ENCODE measurements at regions of chr6 and their contacts with region 1.

Region 1: DNA sequence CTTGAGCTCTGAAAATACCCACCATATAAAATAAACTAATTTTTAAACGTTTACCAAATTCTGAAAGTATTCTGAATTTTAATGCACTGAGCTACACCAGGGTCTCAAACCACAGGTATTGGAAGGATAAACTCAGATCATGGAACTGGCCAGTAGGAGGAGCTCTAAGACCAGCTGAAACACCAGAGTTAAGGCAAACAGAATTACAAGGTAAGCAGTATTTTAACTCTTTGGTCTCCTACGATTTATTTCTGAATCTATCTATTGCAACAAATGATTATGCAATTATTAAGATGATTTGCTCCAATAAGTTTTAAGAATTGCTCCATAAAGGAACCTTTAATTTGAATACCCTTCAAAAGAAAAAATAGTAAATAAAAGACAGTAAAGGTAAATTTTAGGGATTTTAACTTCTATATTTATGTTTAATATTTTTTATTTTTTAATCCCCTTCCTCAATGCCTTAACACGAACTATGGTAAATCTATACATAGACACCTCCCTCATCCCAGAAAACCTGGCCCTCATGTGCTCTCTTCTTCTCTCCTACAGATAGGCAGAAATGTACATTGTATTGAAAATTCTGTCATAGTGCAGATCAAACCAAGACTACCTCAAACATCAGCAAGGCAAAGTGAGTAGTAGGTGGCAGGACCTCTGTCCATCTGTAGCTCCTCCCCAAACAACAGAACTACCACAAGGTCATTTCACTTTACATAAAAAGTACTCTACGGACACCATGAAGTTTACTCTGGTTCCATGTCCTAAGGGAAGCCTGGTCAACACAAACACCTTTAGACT is 58.4 kb downstream of the SMLR1 start:
- DNase-seq: peak; percentile 27 to 82 (median 73)
- ATAC-seq: peak; percentile 97
- H3K4me3 ChIP-seq: no peak overlapping the region
- H3K4me3 Mint-ChIP-seq: no peak overlapping the region
- H3K27ac ChIP-seq: no peak overlapping the region
- H3K27ac Mint-ChIP-seq: peak overlapping the region in 1 of 9 donors; percentile 3
- H3K4me1 ChIP-seq: no peaks in the 10 kb centered on the region
- H3K4me1 Mint-ChIP-seq: no peaks in the 10 kb centered on the region
- H3K27me3 ChIP-seq: no peaks in the 10 kb centered on the region
- H3K27me3 Mint-ChIP-seq: no peaks in the 10 kb centered on the region

Region 2: DNA sequence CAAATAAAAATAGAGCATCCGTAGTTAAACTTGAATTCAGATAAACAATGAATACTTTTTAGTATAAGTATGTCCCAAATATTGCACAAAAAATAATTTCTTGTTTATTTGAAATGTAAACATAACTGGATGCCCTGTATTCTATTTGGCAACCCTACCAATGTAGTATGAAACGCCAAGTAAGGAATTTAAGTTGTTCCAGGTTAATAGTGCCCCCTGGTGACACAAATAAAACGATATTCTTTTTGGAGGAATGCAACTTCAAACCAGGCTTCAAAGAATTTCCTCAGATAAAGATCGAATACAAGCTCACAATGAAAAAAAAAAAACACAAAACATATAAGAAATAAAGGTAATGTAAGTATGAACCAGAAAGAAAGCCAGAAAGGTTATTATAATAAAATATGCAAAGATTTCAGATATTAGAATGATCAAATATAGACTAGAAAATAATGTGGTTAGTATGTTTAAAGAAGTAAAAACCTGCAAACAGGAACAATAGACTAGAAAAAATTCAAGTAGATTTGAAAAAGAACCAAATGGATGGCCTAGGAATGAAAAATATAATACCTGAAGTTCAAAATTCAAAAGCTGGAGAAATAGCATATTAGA is 231.3 kb after region 1 on chr6:
- CTCF ChIA-PET with region 1: interaction called, 76 read pairs
- POLR2A ChIA-PET with region 1: interaction called, 3 read pairs
- intact Hi-C with region 1: loop called (anchors 1 kb)
- DNase-seq: peak in 6 of 9 donors; percentile 26 to 54 (median 42)
- ATAC-seq: peak; percentile 49
- H3K4me3 ChIP-seq: no peak overlapping the region
- H3K4me3 Mint-ChIP-seq: no peak overlapping the region
- H3K27ac ChIP-seq: no peak overlapping the region
- H3K27ac Mint-ChIP-seq: no peak overlapping the region
- H3K4me1 ChIP-seq: no peaks in the 10 kb centered on the region
- H3K4me1 Mint-ChIP-seq: peaks cover 0 to 2% (median 0%) of the 10 kb centered on the region in 7 donors
- H3K27me3 ChIP-seq: no peaks in the 10 kb centered on the region
- H3K27me3 Mint-ChIP-seq: peaks cover 0 to 8% (median 0%) of the 10 kb centered on the region in 5 donors

Region 3: GRCh38 chr6:131182991-131183425 is 297.4 kb after region 1 on chr6:
- CTCF ChIA-PET with region 1: no interaction called
- POLR2A ChIA-PET with region 1: no interaction called
- intact Hi-C with region 1: loop called in 1 of 2 experiments (anchors 5 kb)
- DNase-seq: peak in 8 of 9 donors; percentile 6 to 57 (median 47)
- ATAC-seq: peak; percentile 83
- H3K4me3 ChIP-seq: no peak overlapping the region
- H3K4me3 Mint-ChIP-seq: peak overlapping the region; percentile 10 to 85 (median 72)
- H3K27ac ChIP-seq: no peak overlapping the region
- H3K27ac Mint-ChIP-seq: peak overlapping the region; percentile 86 to 98 (median 94)
- H3K4me1 ChIP-seq: peaks cover 0 to 8% of the 10 kb centered on the region in 2 donors
- H3K4me1 Mint-ChIP-seq: peaks cover 5 to 22% (median 17%) of the 10 kb centered on the region in 7 donors
- H3K27me3 ChIP-seq: no peaks in the 10 kb centered on the region
- H3K27me3 Mint-ChIP-seq: no peaks in the 10 kb centered on the region

Region 4: GRCh38 chr6:131519670-131520436 is 634.3 kb after region 1 on chr6:
- CTCF ChIA-PET with region 1: no interaction called
- POLR2A ChIA-PET with region 1: no interaction called
- intact Hi-C with region 1: loop called in 1 of 2 experiments (anchors 5 kb)
- DNase-seq: peak in 7 of 9 donors; percentile 38 to 64 (median 55)
- ATAC-seq: peak; percentile 92
- H3K4me3 ChIP-seq: no peak overlapping the region
- H3K4me3 Mint-ChIP-seq: no peak overlapping the region
- H3K27ac ChIP-seq: no peak overlapping the region
- H3K27ac Mint-ChIP-seq: peak overlapping the region in 6 of 9 donors; percentile 29 to 69 (median 40)
- H3K4me1 ChIP-seq: peaks cover 0 to 9% of the 10 kb centered on the region in 2 donors
- H3K4me1 Mint-ChIP-seq: peaks cover 8 to 25% (median 20%) of the 10 kb centered on the region in 7 donors
- H3K27me3 ChIP-seq: no peaks in the 10 kb centered on the region
- H3K27me3 Mint-ChIP-seq: peaks cover 0 to 8% (median 0%) of the 10 kb centered on the region in 5 donors

Region 5: DNA sequence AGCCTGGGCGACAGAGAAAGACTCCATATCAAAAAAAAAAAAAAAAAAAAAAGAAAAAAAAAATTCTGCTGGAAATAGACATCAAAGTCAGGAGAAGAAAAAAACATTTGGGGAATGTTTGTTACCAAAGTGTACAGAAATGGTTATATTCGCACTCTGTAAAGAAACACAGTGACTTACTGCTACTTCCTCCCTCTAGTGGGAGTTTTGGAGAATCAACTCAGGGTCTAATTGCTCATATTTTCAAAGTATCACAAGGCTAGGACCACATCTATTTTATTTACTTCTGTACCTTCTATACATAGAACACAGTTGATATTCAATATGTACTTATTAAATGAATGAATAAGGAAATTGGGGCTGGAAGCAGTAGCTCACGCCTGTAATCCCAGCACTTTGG is 711.9 kb after region 1 on chr6:
- CTCF ChIA-PET with region 1: interaction called, 6 read pairs
- POLR2A ChIA-PET with region 1: no interaction called
- intact Hi-C with region 1: loop called (anchors 1 kb)
- DNase-seq: peak in 5 of 9 donors; percentile 8 to 30 (median 17)
- ATAC-seq: no peak
- H3K4me3 ChIP-seq: no peak overlapping the region
- H3K4me3 Mint-ChIP-seq: no peak overlapping the region
- H3K27ac ChIP-seq: no peak overlapping the region
- H3K27ac Mint-ChIP-seq: peak overlapping the region in 1 of 9 donors; percentile 51
- H3K4me1 ChIP-seq: no peaks in the 10 kb centered on the region
- H3K4me1 Mint-ChIP-seq: peaks cover 0 to 4% (median 0%) of the 10 kb centered on the region in 7 donors
- H3K27me3 ChIP-seq: no peaks in the 10 kb centered on the region
- H3K27me3 Mint-ChIP-seq: no peaks in the 10 kb centered on the region

Region 6: GRCh38 chr6:132218059-132218696 is 1332.6 kb after region 1 on chr6:
- CTCF ChIA-PET with region 1: no interaction called
- POLR2A ChIA-PET with region 1: no interaction called
- intact Hi-C with region 1: loop called in 1 of 2 experiments (anchors 5 kb)
- DNase-seq: no peak
- ATAC-seq: no peak
- H3K4me3 ChIP-seq: no peak overlapping the region
- H3K4me3 Mint-ChIP-seq: no peak overlapping the region
- H3K27ac ChIP-seq: no peak overlapping the region
- H3K27ac Mint-ChIP-seq: no peak overlapping the region
- H3K4me1 ChIP-seq: no peaks in the 10 kb centered on the region
- H3K4me1 Mint-ChIP-seq: no peaks in the 10 kb centered on the region
- H3K27me3 ChIP-seq: no peaks in the 10 kb centered on the region
- H3K27me3 Mint-ChIP-seq: peaks cover 0 to 36% (median 16%) of the 10 kb centered on the region in 5 donors

Measured in naive thymus-derived CD4-positive, alpha-beta T cell (primary cell).